Left ventricle myocardium inferior (tissue), 1 donor: ENCODE measurements at regions of chr4 and their contacts with region 1.

Region 1: GRCh38 chr4:185597532-185598188 is 62.4 kb upstream of the PDLIM3 start:
- DNase-seq: peak; percentile 72
- H3K4me3 ChIP-seq: no peak overlapping the region
- H3K27ac ChIP-seq: peak overlapping the region; percentile 70
- H3K4me1 ChIP-seq: peaks cover 58% of the 10 kb centered on the region
- H3K27me3 ChIP-seq: no peaks in the 10 kb centered on the region
- CTCF ChIP-seq: peak; percentile 100

Region 2: GRCh38 chr4:185425647-185426352 is 171.9 kb before region 1 on chr4 and contains the start of gene UFSP2:
- intact Hi-C with region 1: loop called (anchors 10 kb)
- DNase-seq: peak; percentile 88
- H3K4me3 ChIP-seq: peak within 1 kb of the TSS; percentile 80
- H3K27ac ChIP-seq: peak within 1 kb of the TSS; percentile 97
- H3K4me1 ChIP-seq: peaks cover 51% of the 10 kb centered on the region
- H3K27me3 ChIP-seq: no peaks in the 10 kb centered on the region
- CTCF ChIP-seq: no peak
- total RNA-seq, gene UFSP2: 51.2 TPM

Region 3: GRCh38 chr4:185480016-185480732 is 117.5 kb before region 1 on chr4:
- intact Hi-C with region 1: loop called (anchors 10 kb)
- DNase-seq: no peak
- H3K4me3 ChIP-seq: no peak overlapping the region
- H3K27ac ChIP-seq: no peak overlapping the region
- H3K4me1 ChIP-seq: peaks cover 15% of the 10 kb centered on the region
- H3K27me3 ChIP-seq: no peaks in the 10 kb centered on the region
- CTCF ChIP-seq: no peak